ENCODE measurements at regions of chr9 and their contacts with region 1.

Region 1: GRCh38 chr9:101530077-101530711 is 3.5 kb upstream of the RNF20 start:
- DNase-seq: peak in 1 of 2 donors; percentile 85
- H3K4me3 ChIP-seq: no peak overlapping the region
- H3K27ac ChIP-seq: no peak overlapping the region
- H3K4me1 ChIP-seq: peaks cover 0 to 7% of the 10 kb centered on the region in 2 donors
- H3K27me3 ChIP-seq: no peaks in the 10 kb centered on the region
- CTCF ChIP-seq: peak; percentile 59 to 84 (median 75)

Region 2: GRCh38 chr9:101427957-101428655 is 102.1 kb before region 1 on chr9:
- intact Hi-C with region 1: no loop called
- DNase-seq: no peak
- H3K4me3 ChIP-seq: no peak overlapping the region
- H3K27ac ChIP-seq: no peak overlapping the region
- H3K4me1 ChIP-seq: no peaks in the 10 kb centered on the region
- H3K27me3 ChIP-seq: no peaks in the 10 kb centered on the region
- CTCF ChIP-seq: no peak

Region 3: DNA sequence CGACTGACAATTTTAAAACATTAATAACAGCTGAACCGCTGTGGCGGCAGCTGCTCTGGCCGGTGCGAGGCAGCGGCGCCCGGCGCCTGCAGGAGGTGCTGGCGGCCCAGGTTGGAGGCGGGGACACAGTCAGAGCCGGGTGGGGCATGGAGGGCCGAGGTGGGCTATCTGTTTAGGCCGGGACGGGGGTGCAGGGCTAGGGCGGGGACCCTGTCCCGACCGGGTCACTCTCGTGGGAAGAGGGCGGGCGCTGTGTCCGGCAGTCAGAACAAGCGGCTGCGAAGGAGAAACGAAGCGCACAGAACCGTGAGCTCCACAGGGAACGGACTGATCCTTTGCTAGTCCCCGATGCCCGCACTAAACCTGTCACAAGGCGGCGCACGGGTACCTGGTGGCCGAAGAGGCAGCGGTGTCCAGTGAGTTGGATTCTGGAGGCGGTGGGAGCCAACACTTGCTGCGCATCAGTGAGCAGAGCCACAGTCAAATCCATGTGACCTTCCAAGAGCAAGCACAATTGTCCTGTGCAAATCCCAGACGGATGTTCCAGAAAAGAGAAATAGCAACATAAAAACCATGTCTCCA is 81.0 kb before region 1 on chr9:
- intact Hi-C with region 1: loop called (anchors 2 kb)
- DNase-seq: peak in 1 of 2 donors; percentile 78
- H3K4me3 ChIP-seq: peak overlapping the region; percentile 52 to 70
- H3K27ac ChIP-seq: no peak overlapping the region
- H3K4me1 ChIP-seq: no peaks in the 10 kb centered on the region
- H3K27me3 ChIP-seq: no peaks in the 10 kb centered on the region
- CTCF ChIP-seq: peak; percentile 43 to 70 (median 59)

Region 4: DNA sequence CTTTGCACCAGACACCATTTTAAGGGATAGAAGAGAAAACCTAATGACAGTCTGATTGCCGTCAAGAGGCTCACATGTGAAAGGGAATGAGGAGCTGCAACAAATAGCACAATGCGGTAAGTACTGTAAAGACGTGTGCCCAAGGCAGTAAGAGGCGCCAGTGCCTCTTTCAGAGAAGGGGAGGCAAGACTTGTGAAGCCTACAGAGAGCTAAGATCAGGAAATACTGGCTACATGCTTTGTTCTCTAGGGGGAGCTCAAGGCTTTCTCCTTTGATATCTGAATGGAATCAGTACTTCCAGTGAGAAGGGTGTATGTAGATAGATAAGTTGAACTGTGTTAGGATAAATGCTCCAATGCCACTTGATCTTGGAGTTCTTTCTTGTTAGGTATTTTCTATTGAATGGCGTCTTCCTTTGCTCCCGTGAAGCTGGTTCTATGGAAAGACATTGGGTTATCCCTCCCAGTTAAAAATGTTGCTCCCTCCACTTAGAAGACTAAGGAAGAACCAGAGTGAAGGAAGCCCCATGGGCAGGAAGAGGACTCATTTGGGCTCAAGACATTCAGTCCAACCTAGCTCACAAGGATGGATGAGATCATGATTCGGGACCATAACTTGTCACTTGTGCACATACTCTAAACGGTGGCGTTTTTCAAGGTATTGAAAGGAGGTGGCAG is 71.1 kb before region 1 on chr9:
- intact Hi-C with region 1: loop called (anchors 1 kb)
- DNase-seq: no peak
- H3K4me3 ChIP-seq: no peak overlapping the region
- H3K27ac ChIP-seq: no peak overlapping the region
- H3K4me1 ChIP-seq: no peaks in the 10 kb centered on the region
- H3K27me3 ChIP-seq: no peaks in the 10 kb centered on the region
- CTCF ChIP-seq: peak; percentile 57 to 86 (median 73)

Region 5: DNA sequence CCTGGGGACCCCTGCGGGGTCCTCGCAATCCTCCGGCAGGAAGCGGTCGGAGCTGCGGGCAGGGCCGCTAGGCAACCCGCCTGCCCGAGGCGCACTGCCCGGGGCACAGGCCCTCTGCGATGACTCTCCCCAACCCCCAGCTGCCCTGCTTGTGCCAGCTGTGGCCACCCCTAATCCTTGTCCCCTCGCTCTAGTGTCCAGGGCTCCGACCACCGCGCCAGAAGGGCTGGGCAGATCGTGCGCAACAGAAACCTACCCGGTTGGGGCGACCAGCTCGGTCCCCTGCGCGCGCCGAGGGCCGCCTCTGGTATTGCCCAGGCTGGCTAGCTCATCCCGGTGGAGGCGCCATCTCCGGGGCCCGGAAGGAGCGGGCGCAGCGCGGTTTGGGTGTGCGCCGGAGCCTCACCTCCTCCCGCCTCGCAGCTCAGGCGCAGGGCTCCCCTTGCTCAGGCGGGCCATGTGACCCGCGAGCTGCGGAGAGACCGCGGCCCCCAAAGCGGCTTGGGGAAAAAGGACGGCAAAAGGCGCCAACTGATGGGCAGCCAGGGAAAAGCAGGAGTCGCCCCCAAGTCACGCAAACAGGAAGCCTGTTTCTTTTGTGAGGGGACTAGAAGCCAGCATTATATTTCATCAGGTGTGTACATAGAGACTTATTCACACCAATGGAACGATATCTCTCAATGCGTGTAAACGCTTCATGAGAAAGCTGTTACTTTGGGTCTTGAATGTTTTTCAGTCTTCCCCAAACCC is 43.3 kb before region 1 on chr9:
- intact Hi-C with region 1: loop called (anchors 1 kb)
- DNase-seq: peak in 1 of 2 donors; percentile 77
- H3K4me3 ChIP-seq: peak overlapping the region; percentile 81 to 95
- H3K27ac ChIP-seq: peak overlapping the region; percentile 96 to 98
- H3K4me1 ChIP-seq: peaks cover 0 to 2% of the 10 kb centered on the region in 2 donors
- H3K27me3 ChIP-seq: no peaks in the 10 kb centered on the region
- CTCF ChIP-seq: peak in 1 of 3 experiments; percentile 39

Measured in ascending aorta (tissue), 2 donors.